Head of caudate nucleus (tissue), 42 donors: ENCODE measurements at regions of chr19 and their contacts with region 1.

Region 1: DNA sequence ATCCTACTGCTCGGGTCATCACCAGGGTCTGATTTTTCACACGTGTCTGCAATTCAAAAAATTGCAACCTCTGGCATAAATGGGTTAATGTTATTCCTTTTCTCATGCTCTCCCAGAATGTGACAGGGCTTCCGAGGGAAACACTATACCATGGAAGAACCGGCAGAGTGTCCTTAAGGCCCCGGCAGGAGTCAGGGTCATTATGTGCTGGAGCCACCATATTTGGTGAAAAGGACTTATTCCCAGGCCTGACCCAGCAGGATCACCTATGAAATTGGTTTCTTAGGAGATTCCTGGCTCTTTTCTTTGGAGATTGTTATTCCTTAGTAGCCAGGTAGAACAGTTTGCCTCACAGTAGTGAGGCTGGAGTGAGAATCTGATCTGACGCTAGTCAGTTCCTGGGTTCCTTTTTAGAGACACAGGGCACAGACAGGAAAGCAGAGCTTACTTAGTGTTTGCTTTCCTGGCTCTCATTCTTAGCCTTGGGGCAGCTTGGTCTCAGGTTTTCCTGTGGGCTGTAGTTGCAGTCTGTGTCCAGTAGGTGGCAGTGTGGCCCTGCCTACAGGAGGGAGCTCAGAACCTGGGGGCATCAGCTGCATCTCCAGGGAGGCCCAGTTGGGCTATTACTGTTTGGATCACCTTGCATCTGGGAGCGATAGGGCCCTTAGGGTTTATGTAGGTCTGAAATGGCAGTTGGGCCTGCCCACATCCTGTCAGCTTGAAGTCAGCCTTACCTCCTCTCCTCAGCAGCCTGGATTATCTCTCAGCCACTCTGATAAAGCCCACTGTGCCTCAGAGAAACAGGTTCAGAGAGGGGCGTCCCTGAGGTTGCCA is 12.4 kb downstream of the SNRNP70 start:
- DNase-seq: peak in 41 of 42 donors; percentile 51 to 88 (median 74)

Region 2: GRCh38 chr19:48946463-48947257 is 151.0 kb before region 1 on chr19:
- intact Hi-C with region 1: no loop called
- DNase-seq: no peak

Region 3: GRCh38 chr19:49113762-49114629 is 16.3 kb after region 1 on chr19 and contains the start of gene LIN7B:
- intact Hi-C with region 1: no loop called
- DNase-seq: peak in 40 of 42 donors; percentile 34 to 86 (median 69)

Region 4: DNA sequence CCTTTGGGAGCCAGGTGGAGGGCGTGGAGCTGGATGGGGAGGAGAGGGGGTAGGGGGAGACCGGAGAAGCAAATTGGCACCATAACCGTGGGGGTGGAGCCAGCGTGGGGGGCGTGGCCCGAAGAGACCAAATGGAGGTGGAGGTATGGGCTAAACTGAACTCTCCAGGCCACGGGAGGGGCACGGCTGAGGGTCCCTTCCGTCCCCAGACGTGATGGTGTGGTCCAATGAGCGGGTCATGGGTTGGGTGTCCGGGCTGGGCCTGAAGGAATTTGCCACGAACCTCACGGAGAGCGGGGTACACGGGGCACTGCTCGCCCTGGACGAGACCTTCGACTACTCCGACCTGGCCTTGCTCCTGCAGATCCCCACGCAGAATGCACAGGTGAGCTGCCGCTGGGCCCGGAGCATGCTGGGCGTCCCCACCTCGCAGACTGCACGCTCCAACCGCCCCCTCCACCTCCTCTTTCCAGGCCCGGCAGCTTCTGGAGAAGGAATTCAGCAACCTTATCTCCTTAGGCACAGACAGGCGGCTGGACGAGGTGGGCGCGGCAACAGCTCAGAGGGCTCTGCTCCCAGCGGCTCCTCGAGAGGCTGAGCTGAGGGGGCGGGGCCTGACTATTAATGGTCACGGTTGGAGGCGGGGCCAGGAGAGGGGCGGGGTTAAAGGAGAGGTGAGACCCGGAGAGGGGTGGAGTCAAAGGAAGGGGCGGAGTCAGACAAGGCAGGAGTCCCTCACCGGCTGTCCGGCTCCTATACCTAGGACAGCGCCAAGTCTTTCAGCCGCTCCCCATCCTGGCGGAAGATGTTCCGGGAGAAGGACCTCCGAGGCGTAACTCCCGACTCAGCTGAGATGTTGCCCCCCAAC is 51.3 kb after region 1 on chr19:
- intact Hi-C with region 1: loop called (anchors 5 kb)
- DNase-seq: peak; percentile 74 to 92 (median 85)